ENCODE measurements at regions of chr14 and their contacts with region 1.

Region 1: GRCh38 chr14:55097881-55098560 is 31.0 kb upstream of the LGALS3 start:
- DNase-seq: peak; percentile 14 to 34
- ATAC-seq: no peak
- H3K4me3 ChIP-seq: no peak overlapping the region
- H3K27ac ChIP-seq: peak overlapping the region; percentile 17 to 86 (median 71)
- H3K4me1 ChIP-seq: peaks cover 3 to 42% of the 10 kb centered on the region in 2 donors
- H3K27me3 ChIP-seq: no peaks in the 10 kb centered on the region
- CTCF ChIP-seq: no peak
- POLR2A ChIP-seq: no peak

Region 2: GRCh38 chr14:55129428-55130195 is 31.6 kb after region 1 on chr14:
- in situ Hi-C with region 1: no loop called
- intact Hi-C with region 1: loop called (anchors 2 kb)
- DNase-seq: peak; percentile 33 to 44
- ATAC-seq: peak; percentile 56 to 59
- H3K4me3 ChIP-seq: peak overlapping the region; percentile 62 to 75 (median 69)
- H3K27ac ChIP-seq: peak overlapping the region; percentile 81 to 88 (median 86)
- H3K4me1 ChIP-seq: peaks cover 2 to 12% of the 10 kb centered on the region in 2 donors
- H3K27me3 ChIP-seq: peaks cover 0 to 6% (median 0%) of the 10 kb centered on the region in 3 donors
- CTCF ChIP-seq: no peak
- POLR2A ChIP-seq: no peak

Region 3: DNA sequence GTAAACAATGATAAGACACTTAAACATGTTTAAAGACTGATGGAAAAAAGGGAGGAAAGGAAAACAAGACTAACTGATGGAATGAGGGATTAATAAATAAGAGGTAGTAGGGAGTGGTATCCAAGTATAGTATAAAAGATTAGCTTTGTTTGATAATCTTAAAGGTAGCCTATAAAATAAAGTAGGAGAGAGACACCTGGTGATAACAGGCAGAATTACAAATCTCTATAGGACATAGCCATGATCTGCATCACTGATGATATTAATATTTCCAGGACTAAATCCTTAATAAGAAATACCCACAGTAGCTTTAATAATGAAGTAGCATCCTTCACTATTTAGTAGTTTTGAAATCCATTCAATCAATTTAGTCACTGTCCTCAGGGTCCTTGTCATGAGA is 63.0 kb after region 1 on chr14:
- in situ Hi-C with region 1: loop called in 3 of 4 experiments (anchors 5 kb)
- intact Hi-C with region 1: no loop called
- DNase-seq: no peak
- ATAC-seq: no peak
- H3K4me3 ChIP-seq: no peak overlapping the region
- H3K27ac ChIP-seq: no peak overlapping the region
- H3K4me1 ChIP-seq: no peaks in the 10 kb centered on the region
- H3K27me3 ChIP-seq: no peaks in the 10 kb centered on the region
- CTCF ChIP-seq: peak in 3 of 5 experiments; percentile 42 to 57 (median 56)
- POLR2A ChIP-seq: no peak

Region 4: DNA sequence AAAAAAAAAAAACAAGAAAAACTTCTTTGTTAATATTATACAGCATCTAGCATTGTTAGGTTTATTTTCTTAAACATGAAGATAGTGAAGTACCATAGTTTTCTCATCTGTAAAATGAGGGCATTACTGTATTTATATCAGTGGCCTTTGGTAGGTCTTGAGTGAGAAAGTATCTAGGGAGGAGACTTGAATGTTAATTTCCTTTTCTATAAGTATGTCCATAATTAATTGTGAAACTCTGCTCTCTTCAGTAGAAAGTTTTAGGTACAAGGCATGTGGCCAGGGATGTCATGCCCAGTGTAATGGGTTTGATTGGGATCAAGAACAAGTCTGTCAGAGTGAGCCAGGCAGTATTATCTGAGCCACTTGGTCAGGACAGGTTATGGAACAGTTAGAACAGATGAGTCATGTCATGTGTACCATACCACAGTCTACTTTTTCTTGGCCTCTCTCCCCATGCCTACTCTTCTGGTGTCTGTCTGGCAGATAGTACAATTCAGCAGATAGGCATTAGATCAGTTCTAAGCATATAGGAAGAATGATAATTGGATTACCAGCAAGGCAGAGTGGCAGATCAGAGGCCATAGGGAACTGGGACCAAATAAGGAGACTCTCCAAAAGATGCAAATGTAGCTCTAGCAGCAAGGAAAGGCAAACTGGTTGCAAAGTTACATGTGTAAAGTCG is 203.6 kb after region 1 on chr14:
- in situ Hi-C with region 1: no loop called
- intact Hi-C with region 1: no loop called
- DNase-seq: peak; percentile 70 to 74
- ATAC-seq: peak; percentile 91 to 93
- H3K4me3 ChIP-seq: peak overlapping the region in 2 of 4 donors; percentile 14 to 17
- H3K27ac ChIP-seq: peak overlapping the region; percentile 85 to 93 (median 90)
- H3K4me1 ChIP-seq: peaks cover 74 to 77% of the 10 kb centered on the region in 2 donors
- H3K27me3 ChIP-seq: no peaks in the 10 kb centered on the region
- CTCF ChIP-seq: no peak
- POLR2A ChIP-seq: no peak

Region 5: GRCh38 chr14:55446218-55446654 is 348.2 kb after region 1 on chr14:
- in situ Hi-C with region 1: loop called in 1 of 4 experiments (anchors 25 kb)
- intact Hi-C with region 1: no loop called
- DNase-seq: peak in 1 of 2 donors; percentile 14
- ATAC-seq: no peak
- H3K4me3 ChIP-seq: no peak overlapping the region
- H3K27ac ChIP-seq: no peak overlapping the region
- H3K4me1 ChIP-seq: peaks cover 0 to 5% of the 10 kb centered on the region in 2 donors
- H3K27me3 ChIP-seq: no peaks in the 10 kb centered on the region
- CTCF ChIP-seq: peak; percentile 13 to 70 (median 42)
- POLR2A ChIP-seq: no peak

Measured in gastrocnemius medialis (tissue), 4 donors.